ENCODE measurements at regions of chr19 and their contacts with region 1.

Region 1: DNA sequence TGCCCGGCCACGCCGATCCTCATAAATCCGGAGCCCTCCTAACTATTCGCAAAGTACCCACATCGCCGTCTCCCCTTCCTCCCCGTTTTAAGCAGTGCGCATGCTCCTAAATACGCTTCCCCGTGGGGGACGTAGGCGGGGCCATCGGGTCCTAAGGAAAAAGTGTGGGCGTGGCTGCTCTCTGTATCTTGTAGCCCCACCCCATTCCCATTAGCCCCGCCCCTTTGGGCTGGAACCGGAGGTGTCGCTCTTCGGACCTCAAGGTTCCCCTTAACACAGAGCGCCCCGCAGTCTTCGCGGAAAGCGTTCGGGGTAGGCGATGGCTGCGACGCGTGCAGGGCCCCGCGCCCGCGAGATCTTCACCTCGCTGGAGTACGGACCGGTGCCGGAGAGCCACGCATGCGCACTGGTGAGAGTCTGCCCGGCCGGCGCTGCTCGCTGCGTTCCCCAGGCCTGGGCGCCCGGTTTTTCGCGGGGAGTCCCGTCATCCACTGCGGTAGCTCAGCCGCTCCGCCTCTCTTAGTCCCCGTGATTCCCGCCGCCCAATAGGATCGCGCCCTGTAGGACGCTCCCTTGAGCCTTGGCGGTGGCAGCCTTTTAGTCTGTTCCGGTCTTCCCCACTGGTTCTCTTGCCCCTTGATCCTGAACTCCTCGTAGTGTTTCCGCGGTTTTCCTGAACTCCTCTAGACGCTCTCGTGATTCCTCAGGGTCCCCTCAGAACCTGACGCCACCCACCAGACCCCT is at the start of gene ALDH16A1:
- DNase-seq: peak; percentile 80
- H3K4me3 ChIP-seq: peak within 1 kb of the TSS; percentile 79
- H3K27me3 ChIP-seq: no peaks in the 10 kb centered on the region
- CTCF ChIP-seq: no peak
- polyA plus RNA-seq, gene ALDH16A1: 5.9 and 15.0 TPM in 2 replicates

Region 2: DNA sequence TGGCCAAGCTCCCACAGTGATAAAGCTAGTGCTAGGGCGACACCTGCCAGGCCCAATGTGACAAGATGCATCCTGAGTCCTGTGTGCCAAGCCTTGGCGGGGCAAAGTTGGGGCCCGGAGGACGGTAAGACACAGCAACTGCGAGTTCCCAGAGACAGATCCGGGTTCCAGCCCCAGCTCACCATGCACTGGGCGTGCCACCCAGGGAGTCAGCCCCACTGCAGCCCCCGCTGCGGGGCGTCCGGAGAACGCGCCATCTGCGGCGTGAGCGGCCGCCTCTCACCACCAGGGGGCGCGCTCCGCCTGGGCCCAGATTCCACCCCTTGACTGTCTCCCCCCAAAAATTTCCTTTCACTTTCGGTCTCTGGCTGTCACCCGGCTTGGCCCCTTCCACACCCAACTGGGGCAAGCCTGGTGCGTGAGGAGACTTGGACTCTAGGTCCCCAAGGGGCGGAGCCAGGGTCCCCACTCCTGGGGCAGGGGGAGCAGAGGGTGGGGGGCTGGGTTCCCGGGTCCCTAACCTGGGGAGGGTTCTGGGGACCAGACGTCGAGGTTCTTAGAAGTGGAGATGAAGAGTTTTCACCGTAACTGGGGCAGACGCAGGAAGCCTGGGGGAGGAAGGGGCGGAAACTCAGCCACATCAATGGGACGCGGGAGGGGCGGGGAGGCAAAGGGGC is 20.8 kb after region 1 on chr19 and contains the start of gene FLT3LG:
- CTCF ChIA-PET with region 1: interaction called, 20 read pairs
- POLR2A ChIA-PET with region 1: no interaction called
- DNase-seq: no peak
- H3K4me3 ChIP-seq: peak within 1 kb of the TSS; percentile 80
- H3K27me3 ChIP-seq: no peaks in the 10 kb centered on the region
- CTCF ChIP-seq: peak; percentile 98
- polyA plus RNA-seq, gene FLT3LG: 4.9 and 7.7 TPM in 2 replicates

Region 3: DNA sequence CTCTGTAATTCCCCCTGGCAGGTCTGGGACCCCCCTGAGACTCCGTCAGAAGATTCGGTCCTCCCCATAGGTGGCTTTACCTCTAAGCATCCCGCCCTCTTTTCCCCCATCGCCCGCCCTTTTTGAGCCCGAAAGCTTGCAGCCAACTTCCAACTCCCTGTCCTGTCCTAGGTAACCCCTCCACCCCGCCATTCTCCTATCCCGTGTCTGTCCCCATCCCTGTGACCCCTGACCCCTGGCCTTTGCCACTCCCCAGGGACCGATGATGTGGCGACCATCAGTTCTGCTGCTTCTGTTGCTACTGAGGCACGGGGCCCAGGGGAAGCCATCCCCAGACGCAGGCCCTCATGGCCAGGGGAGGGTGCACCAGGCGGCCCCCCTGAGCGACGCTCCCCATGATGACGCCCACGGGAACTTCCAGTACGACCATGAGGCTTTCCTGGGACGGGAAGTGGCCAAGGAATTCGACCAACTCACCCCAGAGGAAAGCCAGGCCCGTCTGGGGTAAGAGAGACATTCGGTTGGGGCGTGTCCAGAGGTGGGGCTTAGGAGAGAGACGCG is 75.1 kb after region 1 on chr19:
- CTCF ChIA-PET with region 1: no interaction called
- POLR2A ChIA-PET with region 1: interaction called, 16 read pairs
- DNase-seq: no peak
- H3K4me3 ChIP-seq: peak overlapping the region; percentile 73
- H3K27me3 ChIP-seq: no peaks in the 10 kb centered on the region
- CTCF ChIP-seq: no peak

Measured in BJ (cell line).